Heart right ventricle (tissue), 16 donors: ENCODE measurements at regions of chr1 and their contacts with region 1.

Region 1: GRCh38 chr1:40755067-40755466 is 28.5 kb upstream of the KCNQ4 start:
- DNase-seq: no peak
- ATAC-seq: peak in 6 of 8 donors; percentile 32 to 77 (median 57)
- H3K4me3 ChIP-seq: no peak overlapping the region
- H3K27ac ChIP-seq: peak overlapping the region in 4 of 10 donors; percentile 11 to 48 (median 20)
- H3K4me1 ChIP-seq: peaks cover 0 to 29% (median 17%) of the 10 kb centered on the region in 9 donors
- H3K27me3 ChIP-seq: no peaks in the 10 kb centered on the region
- CTCF ChIP-seq: no peak

Region 2: DNA sequence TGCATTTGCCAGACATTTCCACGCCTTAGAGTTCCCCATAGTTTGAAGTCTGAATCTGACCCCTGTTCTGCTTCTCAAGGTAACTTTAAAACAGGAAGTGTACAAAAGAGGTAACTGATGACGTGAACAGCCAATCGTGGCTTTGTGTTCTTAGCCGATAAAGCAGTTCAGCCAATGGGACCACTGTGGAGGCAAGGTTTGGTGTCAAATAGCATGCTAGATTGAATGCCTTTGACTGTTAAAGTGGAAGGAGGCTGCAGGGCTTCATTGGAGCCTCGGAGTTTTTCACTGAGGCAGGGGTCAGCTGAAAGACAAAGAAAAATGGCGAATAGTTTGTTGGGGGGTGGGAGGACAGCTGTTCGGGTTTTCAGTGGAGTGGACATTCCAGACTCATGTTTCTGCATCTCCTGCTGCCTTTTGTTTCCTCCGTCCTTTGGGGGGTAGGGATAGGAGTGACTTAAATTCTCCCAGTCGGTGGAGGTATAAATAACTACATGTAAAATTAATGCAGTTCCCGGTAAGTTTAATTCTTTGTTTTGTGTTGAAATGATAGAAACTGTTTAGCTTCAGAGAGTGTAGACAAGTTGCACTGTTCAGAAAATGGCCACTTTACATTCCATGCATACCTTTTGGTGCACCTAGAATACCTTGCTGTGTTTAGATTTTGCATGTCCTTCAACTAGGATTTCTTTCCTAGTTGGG is 45.8 kb before region 1 on chr1:
- intact Hi-C with region 1: loop called in 1 of 10 experiments (anchors 5 kb)
- DNase-seq: peak; percentile 21 to 92
- ATAC-seq: peak; percentile 91 to 97 (median 95)
- H3K4me3 ChIP-seq: peak overlapping the region; percentile 19 to 67 (median 62)
- H3K27ac ChIP-seq: peak overlapping the region; percentile 79 to 91 (median 88)
- H3K4me1 ChIP-seq: peaks cover 0 to 74% (median 68%) of the 10 kb centered on the region in 9 donors
- H3K27me3 ChIP-seq: no peaks in the 10 kb centered on the region
- CTCF ChIP-seq: no peak